CD4-positive, alpha-beta T cell (primary cell): ENCODE measurements at regions of chr2 and their contacts with region 1.

Region 1: GRCh38 chr2:70086838-70087701 is at the start of gene PCBP1:
- DNase-seq: peak; percentile 95 to 99 (median 98)
- ATAC-seq: peak; percentile 55
- H3K4me3 ChIP-seq: peak within 1 kb of the TSS; percentile 66
- H3K4me3 Mint-ChIP-seq: peak within 1 kb of the TSS; percentile 92
- H3K27ac ChIP-seq: peak within 1 kb of the TSS; percentile 100
- H3K27ac Mint-ChIP-seq: peak within 1 kb of the TSS; percentile 100
- H3K4me1 ChIP-seq: peaks cover 74% of the 10 kb centered on the region
- H3K4me1 Mint-ChIP-seq: peaks cover 76% of the 10 kb centered on the region
- H3K27me3 ChIP-seq: no peaks in the 10 kb centered on the region
- H3K27me3 Mint-ChIP-seq: peaks cover 4% of the 10 kb centered on the region
- CTCF ChIP-seq: no peak
- total RNA-seq, gene PCBP1: 228 to 233 TPM

Region 2: DNA sequence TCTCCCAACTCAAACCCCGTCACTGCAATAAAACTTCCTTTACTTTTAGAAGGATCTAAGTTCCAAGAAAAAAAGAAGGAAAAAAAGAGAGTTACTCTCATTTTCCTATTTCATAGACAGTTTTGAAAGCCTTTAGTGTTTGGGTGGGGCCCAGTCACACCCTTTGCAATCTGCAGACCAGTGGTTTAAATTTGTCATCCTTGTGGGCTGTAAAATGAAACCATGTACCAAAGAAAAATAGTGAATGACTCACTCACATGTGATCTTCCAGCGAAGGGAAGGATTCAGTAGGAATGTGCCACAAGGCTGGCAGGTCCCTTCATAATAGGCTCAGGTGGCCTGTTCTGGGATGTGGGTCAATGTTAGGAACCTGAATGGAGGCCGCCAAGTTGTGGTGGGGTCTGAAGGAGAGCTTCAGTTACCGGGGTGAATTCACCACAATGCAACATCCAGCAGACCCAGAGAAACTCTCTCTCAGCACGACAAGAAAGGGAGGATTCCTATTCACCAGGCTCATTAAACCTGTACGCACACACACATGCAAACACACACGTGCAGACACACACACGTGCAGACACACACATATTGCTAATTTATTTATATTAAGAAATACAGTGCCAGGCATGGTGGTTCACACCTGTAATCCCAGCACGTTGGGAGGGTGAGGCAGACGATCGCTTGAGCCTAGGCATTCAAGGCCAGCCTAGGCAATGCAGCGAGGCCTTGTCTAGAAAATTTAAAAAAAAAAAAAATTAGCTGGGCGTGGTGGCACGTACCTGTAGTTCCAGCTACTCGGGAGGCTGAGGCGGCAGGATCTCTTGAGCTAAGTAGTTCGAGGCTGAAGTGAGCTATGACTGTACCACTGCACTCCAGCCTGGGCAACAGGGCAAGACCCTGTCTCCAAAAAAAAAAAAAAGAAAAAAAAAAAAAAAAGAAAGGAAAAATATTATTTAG is 316.6 kb before region 1 on chr2:
- CTCF ChIA-PET with region 1: no interaction called
- POLR2A ChIA-PET with region 1: no interaction called
- intact Hi-C with region 1: no loop called
- DNase-seq: peak in 3 of 14 experiments; percentile 38 to 68 (median 49)
- ATAC-seq: no peak
- H3K4me3 ChIP-seq: no peak overlapping the region
- H3K4me3 Mint-ChIP-seq: no peak overlapping the region
- H3K27ac ChIP-seq: no peak overlapping the region
- H3K27ac Mint-ChIP-seq: no peak overlapping the region
- H3K4me1 ChIP-seq: peaks cover 22% of the 10 kb centered on the region
- H3K4me1 Mint-ChIP-seq: peaks cover 30% of the 10 kb centered on the region
- H3K27me3 ChIP-seq: no peaks in the 10 kb centered on the region
- H3K27me3 Mint-ChIP-seq: no peaks in the 10 kb centered on the region
- CTCF ChIP-seq: no peak

Region 3: DNA sequence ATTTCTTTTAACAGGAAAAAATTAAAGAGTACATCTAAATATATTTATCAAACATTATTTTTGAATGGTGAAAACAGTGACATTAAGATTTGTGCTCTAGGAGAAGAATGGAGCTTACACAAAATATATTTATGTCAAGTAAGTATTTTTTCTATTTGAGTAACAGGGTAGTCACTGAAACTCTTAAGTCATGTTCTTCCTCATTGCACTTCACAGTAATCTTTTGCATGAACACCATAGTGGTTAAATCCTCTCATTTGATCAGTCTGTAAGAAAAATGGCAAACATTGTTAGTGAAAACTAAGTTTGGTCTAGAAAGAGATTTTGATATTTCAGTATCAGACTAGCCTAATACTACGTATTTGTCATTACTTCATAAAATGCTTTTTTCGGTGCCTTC is 249.5 kb before region 1 on chr2:
- CTCF ChIA-PET with region 1: no interaction called
- POLR2A ChIA-PET with region 1: no interaction called
- intact Hi-C with region 1: no loop called
- DNase-seq: no peak
- ATAC-seq: no peak
- H3K4me3 ChIP-seq: no peak overlapping the region
- H3K4me3 Mint-ChIP-seq: no peak overlapping the region
- H3K27ac ChIP-seq: no peak overlapping the region
- H3K27ac Mint-ChIP-seq: no peak overlapping the region
- H3K4me1 ChIP-seq: peaks cover 8% of the 10 kb centered on the region
- H3K4me1 Mint-ChIP-seq: peaks cover 43% of the 10 kb centered on the region
- H3K27me3 ChIP-seq: no peaks in the 10 kb centered on the region
- H3K27me3 Mint-ChIP-seq: no peaks in the 10 kb centered on the region
- CTCF ChIP-seq: no peak

Region 4: GRCh38 chr2:69893684-69894551 is 193.2 kb before region 1 on chr2 and contains the start of gene SNRNP27:
- CTCF ChIA-PET with region 1: no interaction called
- POLR2A ChIA-PET with region 1: interaction called, 10 read pairs
- intact Hi-C with region 1: no loop called
- DNase-seq: peak; percentile 74 to 90 (median 81)
- ATAC-seq: peak; percentile 93
- H3K4me3 ChIP-seq: peak within 1 kb of the TSS; percentile 84
- H3K4me3 Mint-ChIP-seq: peak within 1 kb of the TSS; percentile 100
- H3K27ac ChIP-seq: peak within 1 kb of the TSS; percentile 66 to 77
- H3K27ac Mint-ChIP-seq: peak within 1 kb of the TSS; percentile 99
- H3K4me1 ChIP-seq: peaks cover 19% of the 10 kb centered on the region
- H3K4me1 Mint-ChIP-seq: peaks cover 51% of the 10 kb centered on the region
- H3K27me3 ChIP-seq: no peaks in the 10 kb centered on the region
- H3K27me3 Mint-ChIP-seq: no peaks in the 10 kb centered on the region
- CTCF ChIP-seq: no peak
- total RNA-seq, gene SNRNP27: 50.9 to 54.8 TPM

Region 5: GRCh38 chr2:70104231-70105111 is 17.4 kb after region 1 on chr2:
- CTCF ChIA-PET with region 1: interaction called, 3 read pairs
- POLR2A ChIA-PET with region 1: interaction called, 110 read pairs
- intact Hi-C with region 1: loop called in 1 of 2 experiments (anchors 2 kb)
- DNase-seq: peak in 4 of 14 experiments; percentile 38 to 70 (median 55)
- ATAC-seq: no peak
- H3K4me3 ChIP-seq: peak overlapping the region; percentile 18
- H3K4me3 Mint-ChIP-seq: peak overlapping the region; percentile 83
- H3K27ac ChIP-seq: peak overlapping the region; percentile 66 to 70
- H3K27ac Mint-ChIP-seq: peak overlapping the region; percentile 96
- H3K4me1 ChIP-seq: peaks cover 41% of the 10 kb centered on the region
- H3K4me1 Mint-ChIP-seq: peaks cover 52% of the 10 kb centered on the region
- H3K27me3 ChIP-seq: no peaks in the 10 kb centered on the region
- H3K27me3 Mint-ChIP-seq: no peaks in the 10 kb centered on the region
- CTCF ChIP-seq: no peak

Region 6: DNA sequence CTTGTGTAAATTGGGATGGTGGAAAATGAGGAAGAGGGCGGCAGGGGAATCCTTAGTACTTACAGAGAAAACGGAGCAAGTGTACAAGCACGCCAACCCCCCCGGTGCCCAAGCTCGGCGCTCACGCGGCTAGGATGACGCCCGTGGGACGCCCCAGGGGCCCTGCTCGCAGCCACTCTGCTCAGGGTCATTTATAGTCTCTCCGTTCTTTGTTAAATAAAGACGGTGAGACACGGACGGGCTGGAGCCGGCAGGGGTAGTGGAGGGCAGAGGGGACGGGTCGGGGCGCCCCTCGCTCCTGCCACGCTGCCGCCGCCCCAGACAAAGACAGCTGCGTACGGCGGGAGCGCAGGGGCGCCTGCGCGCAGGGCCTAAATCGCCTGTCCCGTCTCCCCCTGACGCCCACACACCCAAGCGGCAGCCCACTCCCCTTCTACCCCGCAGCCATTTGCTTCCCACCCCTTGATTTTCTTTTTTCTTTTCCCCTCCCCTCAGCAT is 38.0 kb after region 1 on chr2:
- CTCF ChIA-PET with region 1: interaction called, 6 read pairs
- POLR2A ChIA-PET with region 1: interaction called, 932 read pairs
- intact Hi-C with region 1: loop called in 1 of 2 experiments (anchors 1 kb)
- DNase-seq: peak; percentile 57 to 88 (median 62)
- ATAC-seq: peak; percentile 59
- H3K4me3 ChIP-seq: peak overlapping the region; percentile 83
- H3K4me3 Mint-ChIP-seq: peak overlapping the region; percentile 93
- H3K27ac ChIP-seq: peak overlapping the region; percentile 92 to 99
- H3K27ac Mint-ChIP-seq: peak overlapping the region; percentile 99
- H3K4me1 ChIP-seq: peaks cover 72% of the 10 kb centered on the region
- H3K4me1 Mint-ChIP-seq: peaks cover 76% of the 10 kb centered on the region
- H3K27me3 ChIP-seq: no peaks in the 10 kb centered on the region
- H3K27me3 Mint-ChIP-seq: no peaks in the 10 kb centered on the region
- CTCF ChIP-seq: no peak

Region 7: GRCh38 chr2:70142590-70143313 is 55.7 kb after region 1 on chr2:
- CTCF ChIA-PET with region 1: interaction called, 47 read pairs
- POLR2A ChIA-PET with region 1: interaction called, 932 read pairs
- intact Hi-C with region 1: loop called (anchors 1 kb)
- DNase-seq: peak; percentile 98 to 100 (median 100)
- ATAC-seq: peak; percentile 74
- H3K4me3 ChIP-seq: peak overlapping the region; percentile 65
- H3K4me3 Mint-ChIP-seq: peak overlapping the region; percentile 99
- H3K27ac ChIP-seq: peak overlapping the region; percentile 97 to 99
- H3K27ac Mint-ChIP-seq: peak overlapping the region; percentile 99
- H3K4me1 ChIP-seq: peaks cover 60% of the 10 kb centered on the region
- H3K4me1 Mint-ChIP-seq: peaks cover 54% of the 10 kb centered on the region
- H3K27me3 ChIP-seq: no peaks in the 10 kb centered on the region
- H3K27me3 Mint-ChIP-seq: no peaks in the 10 kb centered on the region
- CTCF ChIP-seq: peak; percentile 86

Region 8: DNA sequence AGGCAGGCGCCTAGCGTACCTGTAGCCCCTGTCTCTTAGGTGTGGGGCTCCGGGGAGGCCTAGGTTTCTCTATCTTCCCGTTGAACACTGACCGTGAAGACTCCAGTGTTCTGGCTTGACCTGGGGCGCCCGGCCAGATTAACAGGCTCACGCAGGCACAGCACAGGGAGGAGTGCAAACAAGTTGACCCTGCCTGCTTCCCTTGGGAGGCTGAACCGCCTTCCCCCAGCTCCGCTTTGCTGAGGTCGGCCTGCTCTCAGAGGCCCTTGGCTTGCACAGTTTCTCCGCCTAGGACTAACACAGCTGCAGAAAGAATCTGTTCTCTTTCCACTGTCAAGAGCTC is 171.4 kb after region 1 on chr2:
- CTCF ChIA-PET with region 1: no interaction called
- POLR2A ChIA-PET with region 1: interaction called, 23 read pairs
- intact Hi-C with region 1: no loop called
- DNase-seq: peak in 3 of 14 experiments; percentile 2 to 37 (median 11)
- ATAC-seq: no peak
- H3K4me3 ChIP-seq: peak overlapping the region; percentile 73
- H3K4me3 Mint-ChIP-seq: peak overlapping the region; percentile 95
- H3K27ac ChIP-seq: peak overlapping the region in 1 of 2 donors; percentile 45
- H3K27ac Mint-ChIP-seq: peak overlapping the region; percentile 86
- H3K4me1 ChIP-seq: peaks cover 20% of the 10 kb centered on the region
- H3K4me1 Mint-ChIP-seq: peaks cover 42% of the 10 kb centered on the region
- H3K27me3 ChIP-seq: no peaks in the 10 kb centered on the region
- H3K27me3 Mint-ChIP-seq: no peaks in the 10 kb centered on the region
- CTCF ChIP-seq: no peak

Region 9: DNA sequence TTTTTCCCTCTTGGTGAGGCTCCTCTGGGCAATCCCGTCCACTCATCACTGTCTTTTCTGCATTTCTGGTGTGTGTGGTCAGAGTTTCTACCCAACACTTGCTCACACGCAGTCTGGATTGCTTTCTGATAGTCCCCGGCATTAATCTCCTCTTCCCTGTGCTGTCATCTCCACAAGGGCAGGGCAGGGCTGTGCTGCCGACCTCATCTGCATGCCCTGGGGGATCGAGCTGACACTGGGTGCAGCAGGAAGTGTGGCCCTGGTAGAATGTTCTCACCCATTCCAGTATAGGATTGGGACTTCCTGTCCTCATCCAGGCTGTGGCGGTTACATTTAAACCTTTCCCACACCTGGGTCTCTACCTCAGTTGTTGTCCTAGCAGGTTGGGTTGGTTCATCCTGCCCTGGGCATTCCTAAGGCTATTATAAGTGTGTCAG is 294.8 kb after region 1 on chr2:
- CTCF ChIA-PET with region 1: no interaction called
- POLR2A ChIA-PET with region 1: no interaction called
- intact Hi-C with region 1: no loop called
- DNase-seq: no peak
- ATAC-seq: no peak
- H3K4me3 ChIP-seq: no peak overlapping the region
- H3K4me3 Mint-ChIP-seq: no peak overlapping the region
- H3K27ac ChIP-seq: no peak overlapping the region
- H3K27ac Mint-ChIP-seq: no peak overlapping the region
- H3K4me1 ChIP-seq: no peaks in the 10 kb centered on the region
- H3K4me1 Mint-ChIP-seq: no peaks in the 10 kb centered on the region
- H3K27me3 ChIP-seq: no peaks in the 10 kb centered on the region
- H3K27me3 Mint-ChIP-seq: no peaks in the 10 kb centered on the region
- CTCF ChIP-seq: no peak

Region 10: GRCh38 chr2:70425687-70426301 is 338.7 kb after region 1 on chr2:
- CTCF ChIA-PET with region 1: no interaction called
- POLR2A ChIA-PET with region 1: no interaction called
- intact Hi-C with region 1: no loop called
- DNase-seq: no peak
- ATAC-seq: no peak
- H3K4me3 ChIP-seq: no peak overlapping the region
- H3K4me3 Mint-ChIP-seq: no peak overlapping the region
- H3K27ac ChIP-seq: no peak overlapping the region
- H3K27ac Mint-ChIP-seq: no peak overlapping the region
- H3K4me1 ChIP-seq: no peaks in the 10 kb centered on the region
- H3K4me1 Mint-ChIP-seq: no peaks in the 10 kb centered on the region
- H3K27me3 ChIP-seq: no peaks in the 10 kb centered on the region
- H3K27me3 Mint-ChIP-seq: no peaks in the 10 kb centered on the region
- CTCF ChIP-seq: no peak